ENCODE measurements at regions of chr6 and their contacts with region 1.

Region 1: GRCh38 chr6:34161857-34162515 is 16.1 kb upstream of the GRM4 start:
- DNase-seq: no peak
- H3K4me3 Mint-ChIP-seq: no peak overlapping the region
- H3K27ac Mint-ChIP-seq: no peak overlapping the region
- H3K4me1 Mint-ChIP-seq: no peaks in the 10 kb centered on the region
- H3K27me3 Mint-ChIP-seq: peaks cover 32% of the 10 kb centered on the region

Region 2: DNA sequence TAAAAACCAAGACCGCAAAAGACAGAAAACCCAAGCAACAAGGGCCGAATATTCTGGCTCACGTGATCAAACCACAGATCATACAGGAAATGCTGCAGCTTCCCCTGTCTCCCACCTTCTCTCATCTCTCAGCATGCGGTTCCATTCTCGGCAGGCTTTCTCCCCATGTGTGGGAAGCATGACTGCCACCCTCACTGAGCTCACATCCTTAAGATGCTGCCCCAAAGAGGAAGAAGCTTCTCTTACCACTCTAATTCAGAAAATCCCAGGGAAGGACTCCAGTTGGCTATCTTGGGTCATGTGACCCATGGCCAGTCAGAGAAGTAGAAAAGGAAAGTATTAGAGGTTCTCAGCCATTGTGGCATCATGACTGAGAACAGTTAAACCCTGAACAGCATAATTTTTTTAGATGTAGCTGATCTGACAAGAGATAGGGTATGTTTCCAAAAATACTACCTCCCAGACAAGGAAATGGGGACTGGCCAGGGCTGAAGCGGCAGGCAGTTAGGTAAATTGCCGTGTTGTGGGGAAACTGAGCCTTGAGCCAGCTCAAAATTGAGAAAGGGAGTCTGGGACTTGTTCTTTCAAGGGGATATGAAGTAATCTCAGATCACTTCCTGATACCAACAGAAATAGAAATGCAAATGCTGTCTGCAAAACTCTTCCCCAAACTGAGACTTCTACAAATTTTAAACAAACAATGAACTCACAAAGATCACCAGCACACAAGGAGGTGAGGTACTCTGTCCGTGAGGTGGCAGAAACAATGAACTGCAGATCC is 21.0 kb after region 1 on chr6:
- intact Hi-C with region 1: no loop called
- DNase-seq: peak; percentile 69
- H3K4me3 Mint-ChIP-seq: peak overlapping the region; percentile 15
- H3K27ac Mint-ChIP-seq: peak overlapping the region; percentile 66
- H3K4me1 Mint-ChIP-seq: peaks cover 11% of the 10 kb centered on the region
- H3K27me3 Mint-ChIP-seq: peaks cover 3% of the 10 kb centered on the region

Region 3: GRCh38 chr6:34414999-34415858 is 253.2 kb after region 1 on chr6:
- intact Hi-C with region 1: loop called (anchors 1 kb)
- DNase-seq: peak; percentile 20
- H3K4me3 Mint-ChIP-seq: no peak overlapping the region
- H3K27ac Mint-ChIP-seq: peak overlapping the region; percentile 33
- H3K4me1 Mint-ChIP-seq: peaks cover 14% of the 10 kb centered on the region
- H3K27me3 Mint-ChIP-seq: no peaks in the 10 kb centered on the region